WTC11 (cell line): ENCODE measurements at regions of chr11 and their contacts with region 1.

Region 1: GRCh38 chr11:61477727-61478148 is 30.8 kb upstream of the LRRC10B start:
- DNase-seq: peak; percentile 86
- ATAC-seq: peak; percentile 43
- H3K4me3 Mint-ChIP-seq: no peak overlapping the region
- H3K27ac Mint-ChIP-seq: no peak overlapping the region
- H3K4me1 Mint-ChIP-seq: peaks cover 29% of the 10 kb centered on the region
- H3K27me3 Mint-ChIP-seq: peaks cover 3% of the 10 kb centered on the region; the same call in 1 of the 2 replicates
- CTCF ChIP-seq: peak; percentile 95

Region 2: DNA sequence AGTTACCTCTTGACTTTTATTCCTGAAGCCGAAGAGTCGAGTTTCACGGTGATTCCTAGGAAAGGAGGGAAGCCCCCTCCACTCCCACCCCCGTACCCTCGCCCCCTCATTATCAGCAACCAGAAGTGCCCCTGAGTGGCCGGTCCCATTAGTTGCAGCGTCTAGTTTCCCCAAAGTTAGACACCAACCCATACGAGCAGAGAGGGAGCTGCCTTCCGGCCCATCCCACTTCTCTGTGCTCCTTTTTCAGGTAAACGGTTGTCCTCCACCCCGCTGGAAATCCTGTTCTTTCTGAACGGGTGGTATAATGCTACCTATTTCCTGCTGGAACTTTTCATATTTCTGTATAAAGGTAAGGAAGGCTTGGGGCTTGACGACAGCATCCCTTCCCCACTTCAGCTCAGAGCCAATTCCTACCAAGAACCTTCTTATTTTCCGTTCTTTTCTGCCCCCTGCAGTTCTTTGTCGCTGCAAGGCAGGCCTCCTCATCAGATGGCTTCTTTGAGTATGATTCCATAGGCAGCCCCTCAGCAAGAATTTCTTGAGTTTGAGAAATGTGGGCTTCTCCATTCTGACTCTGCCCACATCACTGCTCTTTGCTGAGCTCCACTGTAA is 84.7 kb before region 1 on chr11:
- CTCF ChIA-PET with region 1: no interaction called
- POLR2A ChIA-PET with region 1: no interaction called
- DNase-seq: no peak
- ATAC-seq: peak; percentile 14
- H3K4me3 Mint-ChIP-seq: peak overlapping the region; percentile 96
- H3K27ac Mint-ChIP-seq: peak overlapping the region; percentile 80
- H3K4me1 Mint-ChIP-seq: peaks cover 22% of the 10 kb centered on the region
- H3K27me3 Mint-ChIP-seq: no peaks in the 10 kb centered on the region
- CTCF ChIP-seq: no peak

Region 3: DNA sequence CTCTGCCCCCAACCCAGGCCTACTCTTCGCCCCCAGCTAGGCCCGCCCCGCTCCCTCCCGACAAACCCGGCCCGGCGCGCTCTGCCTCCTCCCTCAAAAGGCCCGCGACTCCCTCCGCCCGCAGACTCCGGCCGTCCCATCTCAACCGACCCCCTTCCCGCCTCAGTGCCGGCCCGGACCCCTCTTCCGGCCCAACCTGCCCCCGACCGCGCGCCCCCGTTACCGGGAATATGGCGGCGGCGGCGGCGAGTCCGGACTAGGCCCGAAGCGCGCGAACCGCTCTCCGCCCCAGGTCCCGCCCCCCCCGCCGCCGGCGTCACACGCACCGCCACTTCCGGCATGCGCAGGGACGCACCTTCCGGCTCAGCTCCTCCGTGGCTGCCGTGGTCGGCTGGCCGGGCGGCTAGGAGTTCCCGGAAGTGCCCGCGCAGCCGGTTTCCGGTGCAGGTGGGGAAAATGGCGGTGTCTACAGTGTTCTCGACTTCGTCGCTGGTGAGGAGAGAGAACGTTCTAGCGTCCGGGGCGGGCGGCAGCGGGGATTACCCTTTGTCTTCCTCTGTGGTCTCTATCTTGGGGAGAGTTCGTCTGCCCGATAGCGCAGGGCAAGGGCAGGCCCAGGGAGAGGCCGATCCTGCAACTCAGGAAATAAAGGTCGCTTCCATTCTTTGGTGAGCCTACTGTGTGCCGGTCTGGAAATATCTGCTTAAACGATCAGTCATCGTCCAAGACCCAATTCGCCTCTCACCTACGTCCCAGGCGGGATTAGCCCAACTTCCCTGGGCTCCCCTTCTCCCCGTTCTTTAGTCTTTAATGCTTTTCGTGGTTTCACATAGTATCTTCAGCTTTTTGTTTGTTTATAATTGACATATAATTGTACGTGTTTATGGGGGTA is 47.8 kb before region 1 on chr11 and contains the starts of genes CPSF7 and SDHAF2:
- CTCF ChIA-PET with region 1: interaction called, 18 read pairs
- POLR2A ChIA-PET with region 1: no interaction called
- DNase-seq: peak; percentile 97
- ATAC-seq: peak; percentile 86
- H3K4me3 Mint-ChIP-seq: peak within 1 kb of the TSS; percentile 100
- H3K27ac Mint-ChIP-seq: peak within 1 kb of the TSS; percentile 100
- H3K4me1 Mint-ChIP-seq: peaks cover 20% of the 10 kb centered on the region
- H3K27me3 Mint-ChIP-seq: no peaks in the 10 kb centered on the region
- CTCF ChIP-seq: no peak
- total RNA-seq, gene CPSF7: 86.0 to 90.7 TPM (median 88.3 TPM) in 3 replicates
- total RNA-seq, gene SDHAF2: 36.2 to 36.8 TPM (median 36.5 TPM) in 3 replicates

Region 4: GRCh38 chr11:61495801-61496597 is 18.3 kb after region 1 on chr11:
- CTCF ChIA-PET with region 1: interaction called, 56 read pairs
- POLR2A ChIA-PET with region 1: no interaction called
- DNase-seq: no peak
- ATAC-seq: no peak
- H3K4me3 Mint-ChIP-seq: no peak overlapping the region
- H3K27ac Mint-ChIP-seq: no peak overlapping the region
- H3K4me1 Mint-ChIP-seq: peaks cover 20% of the 10 kb centered on the region
- H3K27me3 Mint-ChIP-seq: no peaks in the 10 kb centered on the region
- CTCF ChIP-seq: no peak

Region 5: DNA sequence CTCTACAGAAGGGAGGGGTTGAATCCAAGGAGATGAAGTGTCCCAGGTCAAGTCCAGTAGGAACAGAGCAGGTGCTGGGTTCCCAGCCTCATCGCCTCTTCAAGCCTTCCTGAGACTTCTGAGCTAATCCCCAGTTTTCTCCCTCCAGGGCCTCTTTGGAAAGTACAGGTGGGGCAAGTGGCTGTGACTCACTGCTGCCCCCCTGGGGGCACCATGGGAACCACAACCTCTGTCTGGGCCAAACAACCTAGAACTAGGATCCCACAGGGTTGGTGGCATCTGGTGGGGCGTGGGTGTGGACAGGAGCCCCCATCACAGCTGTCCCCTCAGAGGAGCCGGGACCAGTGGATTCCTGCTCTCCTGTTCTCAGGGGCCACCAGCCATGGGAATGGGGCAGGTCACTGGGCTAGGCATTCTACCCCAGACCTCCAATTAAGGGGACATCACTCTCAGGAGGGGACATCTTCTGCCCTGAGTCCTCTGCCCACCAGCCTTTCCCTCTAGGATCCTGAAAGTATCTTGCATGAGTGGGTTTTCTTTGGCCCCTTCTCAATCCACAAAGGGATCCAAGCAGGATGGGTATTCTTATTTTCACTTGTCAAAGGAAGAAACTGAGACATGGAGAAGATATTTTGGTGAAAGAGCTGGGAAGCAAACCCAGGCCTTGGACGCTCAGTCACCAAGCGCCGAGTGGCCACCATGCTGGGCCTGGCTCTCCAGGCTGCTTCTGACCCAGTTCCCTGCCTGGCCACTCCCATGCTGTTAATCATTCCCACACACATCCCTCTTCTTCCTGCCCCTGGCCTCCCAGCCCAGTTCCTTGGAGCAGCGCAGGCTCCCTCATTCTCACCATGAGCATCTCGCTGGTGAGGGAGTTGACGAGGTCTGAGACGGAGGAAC is 54.7 kb after region 1 on chr11:
- CTCF ChIA-PET with region 1: interaction called, 82 read pairs
- POLR2A ChIA-PET with region 1: no interaction called
- DNase-seq: peak; percentile 77
- ATAC-seq: peak; percentile 85
- H3K4me3 Mint-ChIP-seq: no peak overlapping the region
- H3K27ac Mint-ChIP-seq: no peak overlapping the region
- H3K4me1 Mint-ChIP-seq: peaks cover 10% of the 10 kb centered on the region
- H3K27me3 Mint-ChIP-seq: no peaks in the 10 kb centered on the region
- CTCF ChIP-seq: peak; percentile 98

Region 6: DNA sequence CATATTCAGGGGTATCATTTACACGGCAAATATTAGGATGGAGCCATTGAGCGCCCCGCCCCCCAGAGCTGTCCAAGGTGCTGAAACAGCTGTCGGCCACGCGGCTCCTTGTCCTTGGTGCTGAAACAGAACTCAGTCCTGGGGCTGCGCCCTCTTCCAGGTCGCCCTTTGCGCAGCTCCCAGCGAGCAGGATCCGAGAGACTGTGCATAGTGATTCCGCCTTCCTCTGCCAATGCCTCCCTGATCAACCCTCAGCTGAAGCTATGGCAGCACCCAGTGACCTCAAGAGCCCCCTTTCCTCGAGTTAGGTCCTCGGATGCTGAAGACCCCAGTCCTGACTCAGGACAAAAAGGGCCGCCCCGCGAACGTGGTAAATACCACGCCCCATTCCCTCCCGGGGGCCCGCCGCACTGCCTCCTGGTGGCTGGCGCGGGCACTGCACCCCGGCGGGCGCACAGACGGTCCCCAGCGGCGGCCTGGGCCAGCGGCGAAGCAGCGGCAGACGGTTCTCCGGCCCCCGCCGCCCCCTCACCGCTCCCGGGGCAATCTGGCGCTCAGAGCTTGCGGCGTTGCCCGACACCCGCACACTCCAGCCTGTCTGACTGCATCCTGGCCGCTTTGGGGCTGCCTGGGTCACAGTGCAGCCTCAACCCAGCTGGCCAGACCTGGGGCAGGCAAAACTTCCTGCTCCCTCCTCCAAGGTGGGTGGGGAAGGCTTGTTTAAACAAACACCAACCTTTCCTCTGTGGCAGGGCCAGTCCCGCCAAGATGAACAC is 89.7 kb after region 1 on chr11:
- CTCF ChIA-PET with region 1: interaction called, 24 read pairs
- POLR2A ChIA-PET with region 1: no interaction called
- DNase-seq: peak; percentile 90
- ATAC-seq: peak; percentile 86
- H3K4me3 Mint-ChIP-seq: peak overlapping the region; percentile 59
- H3K27ac Mint-ChIP-seq: no peak overlapping the region
- H3K4me1 Mint-ChIP-seq: peaks cover 28% of the 10 kb centered on the region
- H3K27me3 Mint-ChIP-seq: peaks cover 19% of the 10 kb centered on the region
- CTCF ChIP-seq: peak; percentile 99

Region 7: GRCh38 chr11:61627567-61628445 is 150.1 kb after region 1 on chr11:
- CTCF ChIA-PET with region 1: interaction called, 32 read pairs
- POLR2A ChIA-PET with region 1: no interaction called
- DNase-seq: peak; percentile 87
- ATAC-seq: peak; percentile 79
- H3K4me3 Mint-ChIP-seq: no peak overlapping the region
- H3K27ac Mint-ChIP-seq: peak overlapping the region; percentile 70
- H3K4me1 Mint-ChIP-seq: peaks cover 50% of the 10 kb centered on the region
- H3K27me3 Mint-ChIP-seq: no peaks in the 10 kb centered on the region
- CTCF ChIP-seq: peak; percentile 92